CD8-positive, alpha-beta T cell (primary cell): ENCODE measurements at regions of chr16 and their contacts with region 1.

Region 1: DNA sequence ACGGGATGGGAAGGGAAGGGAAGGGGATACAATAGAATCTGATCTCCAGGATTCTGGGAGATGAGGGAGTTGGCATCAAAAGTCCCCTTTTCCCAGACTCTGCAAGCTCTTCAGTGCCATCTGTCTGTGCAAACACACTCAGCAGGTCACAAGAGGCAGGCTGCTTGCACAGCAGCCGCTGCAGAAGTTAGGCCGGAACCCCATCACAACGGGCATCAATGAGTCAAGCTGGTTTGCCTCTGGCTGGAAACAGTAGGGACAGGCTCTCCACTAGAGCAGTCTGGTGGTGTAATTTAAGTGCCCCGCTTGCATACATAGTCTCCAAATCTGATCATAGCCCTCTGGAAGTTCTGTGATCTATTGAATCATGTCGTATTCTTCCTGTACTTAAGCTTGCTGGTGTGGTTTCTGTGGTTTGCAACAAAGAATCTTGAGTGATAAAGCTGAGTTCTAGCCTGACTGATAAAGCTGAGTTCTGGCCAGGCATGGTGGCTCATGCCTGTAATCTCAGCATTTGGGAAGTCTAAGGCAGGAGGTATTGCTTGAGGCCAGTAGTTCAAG is 33.7 kb upstream of the KDM8 start:
- DNase-seq: peak; percentile 54 to 93 (median 77)
- ATAC-seq: peak; percentile 87
- H3K4me3 ChIP-seq: no peak overlapping the region
- H3K4me3 Mint-ChIP-seq: peak overlapping the region; percentile 51
- H3K27ac ChIP-seq: peak overlapping the region in 1 of 2 experiments; percentile 53
- H3K27ac Mint-ChIP-seq: peak overlapping the region; percentile 89
- H3K4me1 ChIP-seq: peaks cover 63% of the 10 kb centered on the region
- H3K4me1 Mint-ChIP-seq: peaks cover 64% of the 10 kb centered on the region
- H3K27me3 ChIP-seq: no peaks in the 10 kb centered on the region
- H3K27me3 Mint-ChIP-seq: no peaks in the 10 kb centered on the region
- CTCF ChIP-seq: no peak

Region 2: GRCh38 chr16:27154705-27155521 is 14.7 kb before region 1 on chr16:
- CTCF ChIA-PET with region 1: interaction called, 48 read pairs
- POLR2A ChIA-PET with region 1: no interaction called
- intact Hi-C with region 1: loop called (anchors 1 kb)
- DNase-seq: peak; percentile 39 to 83 (median 71)
- ATAC-seq: peak; percentile 94
- H3K4me3 ChIP-seq: no peak overlapping the region
- H3K4me3 Mint-ChIP-seq: no peak overlapping the region
- H3K27ac ChIP-seq: no peak overlapping the region
- H3K27ac Mint-ChIP-seq: no peak overlapping the region
- H3K4me1 ChIP-seq: peaks cover 9% of the 10 kb centered on the region
- H3K4me1 Mint-ChIP-seq: peaks cover 8% of the 10 kb centered on the region
- H3K27me3 ChIP-seq: no peaks in the 10 kb centered on the region
- H3K27me3 Mint-ChIP-seq: no peaks in the 10 kb centered on the region
- CTCF ChIP-seq: peak; percentile 99

Region 3: DNA sequence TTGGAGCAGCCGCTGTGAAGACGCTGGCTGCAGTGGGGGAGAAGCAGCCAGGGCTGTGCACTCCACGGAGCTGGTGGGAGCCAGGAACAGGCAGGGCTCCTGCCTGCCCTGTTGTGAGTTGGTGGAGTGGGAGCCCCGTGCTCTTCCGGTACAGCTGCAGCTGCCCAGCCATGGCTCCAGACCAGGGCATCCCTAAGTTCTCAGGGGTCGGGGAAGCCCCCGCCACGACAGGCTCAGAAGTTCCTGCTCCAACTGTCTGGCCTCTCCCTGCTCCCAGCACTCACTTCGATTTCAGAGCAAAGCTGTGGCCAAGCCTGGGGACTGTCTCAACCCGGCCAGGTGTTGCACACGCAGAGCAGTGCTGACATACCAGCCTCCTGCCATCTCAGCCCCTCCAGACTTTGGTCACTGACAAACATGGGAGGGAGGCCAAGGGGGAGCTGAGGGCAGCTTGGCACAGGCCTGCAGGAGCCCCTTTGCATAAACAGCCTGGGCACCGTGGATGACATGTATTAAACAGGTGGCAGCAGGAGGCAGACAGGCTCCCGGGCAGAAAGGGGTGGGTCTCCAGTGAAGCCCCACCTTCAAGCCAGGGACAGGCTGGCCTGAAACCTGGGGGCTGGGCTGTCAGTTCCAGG is 19.9 kb after region 1 on chr16:
- CTCF ChIA-PET with region 1: interaction called, 12 read pairs
- POLR2A ChIA-PET with region 1: interaction called, 5 read pairs
- intact Hi-C with region 1: no loop called
- DNase-seq: no peak
- ATAC-seq: no peak
- H3K4me3 ChIP-seq: no peak overlapping the region
- H3K4me3 Mint-ChIP-seq: no peak overlapping the region
- H3K27ac ChIP-seq: no peak overlapping the region
- H3K27ac Mint-ChIP-seq: no peak overlapping the region
- H3K4me1 ChIP-seq: peaks cover 6% of the 10 kb centered on the region
- H3K4me1 Mint-ChIP-seq: peaks cover 14% of the 10 kb centered on the region
- H3K27me3 ChIP-seq: no peaks in the 10 kb centered on the region
- H3K27me3 Mint-ChIP-seq: no peaks in the 10 kb centered on the region
- CTCF ChIP-seq: no peak

Region 4: GRCh38 chr16:27195941-27196595 is 26.5 kb after region 1 on chr16:
- CTCF ChIA-PET with region 1: interaction called, 12 read pairs
- POLR2A ChIA-PET with region 1: interaction called, 8 read pairs
- intact Hi-C with region 1: loop called in 1 of 2 experiments (anchors 1 kb)
- DNase-seq: peak in 8 of 9 experiments; percentile 29 to 87 (median 65)
- ATAC-seq: peak; percentile 89
- H3K4me3 ChIP-seq: peak overlapping the region in 1 of 2 experiments; percentile 18
- H3K4me3 Mint-ChIP-seq: peak overlapping the region; percentile 58
- H3K27ac ChIP-seq: peak overlapping the region; percentile 20 to 53
- H3K27ac Mint-ChIP-seq: peak overlapping the region; percentile 98
- H3K4me1 ChIP-seq: peaks cover 68% of the 10 kb centered on the region
- H3K4me1 Mint-ChIP-seq: peaks cover 70% of the 10 kb centered on the region
- H3K27me3 ChIP-seq: no peaks in the 10 kb centered on the region
- H3K27me3 Mint-ChIP-seq: no peaks in the 10 kb centered on the region
- CTCF ChIP-seq: no peak

Region 5: DNA sequence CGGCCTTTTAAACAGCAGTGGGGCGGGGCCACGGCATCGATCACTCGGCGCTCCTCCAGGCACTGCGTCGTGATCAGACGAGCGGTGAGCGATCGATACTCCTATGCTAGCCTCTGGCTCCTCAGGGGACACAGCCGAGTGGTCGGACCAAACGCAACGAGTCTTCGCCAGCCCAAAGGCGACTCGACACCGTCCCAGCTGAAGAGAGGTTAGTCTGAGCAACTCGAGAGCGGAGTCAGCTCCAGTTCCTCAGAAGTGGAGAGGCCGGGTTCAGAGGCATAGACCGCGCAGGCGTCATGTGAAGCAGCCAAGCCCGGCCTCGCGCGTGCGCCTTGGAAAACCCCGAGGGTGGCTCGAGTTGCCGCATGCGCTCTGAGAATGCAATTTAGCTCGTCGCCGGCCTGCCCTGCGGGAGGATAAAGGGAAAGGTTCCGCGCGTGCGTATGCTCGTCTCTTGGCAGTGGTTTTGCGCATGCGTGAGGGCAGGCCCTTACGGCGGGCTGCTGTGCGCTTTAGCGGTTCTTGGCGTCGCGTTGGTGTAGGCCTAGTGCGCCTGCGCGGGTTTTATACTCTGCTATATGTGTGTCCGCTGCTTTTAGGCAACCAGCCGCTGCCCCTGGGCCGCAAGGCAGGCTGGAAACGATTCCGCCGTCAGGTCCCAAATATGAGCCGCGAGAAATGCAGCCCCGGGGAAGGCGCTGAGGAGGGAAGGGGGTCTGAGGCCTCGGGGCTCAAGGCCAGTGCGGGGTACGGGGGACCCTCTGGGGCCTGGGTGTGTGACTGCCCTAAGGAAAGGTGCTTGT is 34.0 kb after region 1 on chr16 and contains the start of gene KDM8:
- CTCF ChIA-PET with region 1: interaction called, 11 read pairs
- POLR2A ChIA-PET with region 1: interaction called, 18 read pairs
- intact Hi-C with region 1: no loop called
- DNase-seq: peak; percentile 99 to 100 (median 100)
- ATAC-seq: peak; percentile 85
- H3K4me3 ChIP-seq: peak within 1 kb of the TSS; percentile 83 to 93
- H3K4me3 Mint-ChIP-seq: peak within 1 kb of the TSS; percentile 96
- H3K27ac ChIP-seq: peak within 1 kb of the TSS; percentile 83 to 97
- H3K27ac Mint-ChIP-seq: peak within 1 kb of the TSS; percentile 99
- H3K4me1 ChIP-seq: peaks cover 54% of the 10 kb centered on the region
- H3K4me1 Mint-ChIP-seq: peaks cover 61% of the 10 kb centered on the region
- H3K27me3 ChIP-seq: no peaks in the 10 kb centered on the region
- H3K27me3 Mint-ChIP-seq: no peaks in the 10 kb centered on the region
- CTCF ChIP-seq: no peak
- total RNA-seq, gene KDM8: 17.6 to 22.6 TPM

Region 6: GRCh38 chr16:27449434-27450195 is 280.0 kb after region 1 on chr16:
- CTCF ChIA-PET with region 1: interaction called, 3 read pairs
- POLR2A ChIA-PET with region 1: no interaction called
- intact Hi-C with region 1: loop called in 1 of 2 experiments (anchors 1 kb)
- DNase-seq: peak; percentile 63 to 97 (median 80)
- ATAC-seq: peak; percentile 60
- H3K4me3 ChIP-seq: peak overlapping the region; percentile 17 to 26
- H3K4me3 Mint-ChIP-seq: peak overlapping the region; percentile 70
- H3K27ac ChIP-seq: peak overlapping the region; percentile 60 to 91
- H3K27ac Mint-ChIP-seq: peak overlapping the region; percentile 99
- H3K4me1 ChIP-seq: peaks cover 68% of the 10 kb centered on the region
- H3K4me1 Mint-ChIP-seq: peaks cover 87% of the 10 kb centered on the region
- H3K27me3 ChIP-seq: no peaks in the 10 kb centered on the region
- H3K27me3 Mint-ChIP-seq: no peaks in the 10 kb centered on the region
- CTCF ChIP-seq: no peak